ENCODE measurements at regions of chr2 and their contacts with region 1.

Region 1: DNA sequence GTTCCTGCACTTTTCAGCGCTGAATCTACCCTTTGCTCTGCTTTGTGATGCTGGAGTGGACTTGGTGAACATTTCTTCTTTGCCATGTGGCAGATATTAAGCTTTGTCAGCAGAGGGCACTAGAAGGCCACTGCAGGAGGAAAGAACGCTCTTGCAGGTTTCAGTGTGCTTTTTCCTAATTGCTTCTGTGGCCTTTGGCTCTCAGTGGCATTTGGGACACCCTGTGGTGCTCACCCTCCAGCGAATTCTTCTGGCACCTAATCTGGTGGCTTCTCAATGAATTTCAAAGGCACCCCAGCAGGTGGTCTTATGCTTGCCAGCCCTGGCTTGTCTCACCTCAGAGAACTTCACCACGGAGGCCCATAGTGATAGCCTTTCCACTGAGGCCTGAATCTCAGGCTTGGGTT is 146.7 kb downstream of the MYO3B start:
- DNase-seq: peak; percentile 36
- H3K4me3 Mint-ChIP-seq: no peak overlapping the region
- H3K27ac Mint-ChIP-seq: no peak overlapping the region
- H3K4me1 Mint-ChIP-seq: no peaks in the 10 kb centered on the region
- H3K27me3 Mint-ChIP-seq: peaks cover 4% of the 10 kb centered on the region

Region 2: GRCh38 chr2:170361090-170361936 is 36.7 kb after region 1 on chr2:
- intact Hi-C with region 1: loop called (anchors 1 kb)
- DNase-seq: peak; percentile 39
- H3K4me3 Mint-ChIP-seq: no peak overlapping the region
- H3K27ac Mint-ChIP-seq: peak overlapping the region; percentile 94
- H3K4me1 Mint-ChIP-seq: peaks cover 33% of the 10 kb centered on the region
- H3K27me3 Mint-ChIP-seq: peaks cover 2% of the 10 kb centered on the region

Region 3: GRCh38 chr2:170369894-170370293 is 45.3 kb after region 1 on chr2:
- intact Hi-C with region 1: loop called (anchors 1 kb)
- DNase-seq: no peak
- H3K4me3 Mint-ChIP-seq: no peak overlapping the region
- H3K27ac Mint-ChIP-seq: no peak overlapping the region
- H3K4me1 Mint-ChIP-seq: peaks cover 44% of the 10 kb centered on the region
- H3K27me3 Mint-ChIP-seq: peaks cover 12% of the 10 kb centered on the region

Region 4: DNA sequence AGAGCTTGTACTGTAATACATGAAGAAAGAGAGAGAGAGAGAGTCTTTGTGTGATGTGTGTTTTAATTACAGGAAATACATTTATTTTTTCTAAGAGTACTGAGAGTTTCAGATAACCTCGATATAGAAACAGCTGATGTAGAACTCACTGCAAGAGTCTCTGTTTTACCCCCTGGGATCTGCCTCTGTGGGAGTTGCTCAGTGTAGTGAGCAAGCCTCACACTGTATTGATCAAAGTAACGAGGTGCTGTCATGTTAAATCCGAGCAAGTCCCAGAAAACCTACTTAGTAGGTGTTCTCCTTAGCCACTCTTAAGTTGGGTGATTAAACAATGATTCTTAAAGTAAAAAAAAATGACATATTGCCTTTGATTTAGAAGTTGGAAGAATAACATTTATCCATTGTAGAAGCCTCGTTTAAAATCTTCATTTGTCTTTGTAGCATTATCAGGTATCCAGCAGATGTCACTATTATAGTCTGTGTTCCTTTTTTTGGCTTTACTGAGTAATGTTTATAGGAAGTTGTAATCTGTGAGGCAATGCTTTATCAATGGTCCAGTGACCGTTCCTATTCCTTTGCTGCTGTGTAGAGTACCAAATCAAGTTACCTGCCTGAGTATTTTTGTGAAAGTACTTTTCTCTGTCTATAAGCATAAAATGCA is 72.3 kb after region 1 on chr2:
- intact Hi-C with region 1: loop called (anchors 2 kb)
- DNase-seq: no peak
- H3K4me3 Mint-ChIP-seq: no peak overlapping the region
- H3K27ac Mint-ChIP-seq: no peak overlapping the region
- H3K4me1 Mint-ChIP-seq: no peaks in the 10 kb centered on the region
- H3K27me3 Mint-ChIP-seq: peaks cover 33% of the 10 kb centered on the region

Region 5: GRCh38 chr2:170409164-170409535 is 84.5 kb after region 1 on chr2:
- intact Hi-C with region 1: loop called (anchors 1 kb)
- DNase-seq: peak; percentile 52
- H3K4me3 Mint-ChIP-seq: peak overlapping the region; percentile 45
- H3K27ac Mint-ChIP-seq: no peak overlapping the region
- H3K4me1 Mint-ChIP-seq: peaks cover 8% of the 10 kb centered on the region
- H3K27me3 Mint-ChIP-seq: peaks cover 10% of the 10 kb centered on the region

Region 6: DNA sequence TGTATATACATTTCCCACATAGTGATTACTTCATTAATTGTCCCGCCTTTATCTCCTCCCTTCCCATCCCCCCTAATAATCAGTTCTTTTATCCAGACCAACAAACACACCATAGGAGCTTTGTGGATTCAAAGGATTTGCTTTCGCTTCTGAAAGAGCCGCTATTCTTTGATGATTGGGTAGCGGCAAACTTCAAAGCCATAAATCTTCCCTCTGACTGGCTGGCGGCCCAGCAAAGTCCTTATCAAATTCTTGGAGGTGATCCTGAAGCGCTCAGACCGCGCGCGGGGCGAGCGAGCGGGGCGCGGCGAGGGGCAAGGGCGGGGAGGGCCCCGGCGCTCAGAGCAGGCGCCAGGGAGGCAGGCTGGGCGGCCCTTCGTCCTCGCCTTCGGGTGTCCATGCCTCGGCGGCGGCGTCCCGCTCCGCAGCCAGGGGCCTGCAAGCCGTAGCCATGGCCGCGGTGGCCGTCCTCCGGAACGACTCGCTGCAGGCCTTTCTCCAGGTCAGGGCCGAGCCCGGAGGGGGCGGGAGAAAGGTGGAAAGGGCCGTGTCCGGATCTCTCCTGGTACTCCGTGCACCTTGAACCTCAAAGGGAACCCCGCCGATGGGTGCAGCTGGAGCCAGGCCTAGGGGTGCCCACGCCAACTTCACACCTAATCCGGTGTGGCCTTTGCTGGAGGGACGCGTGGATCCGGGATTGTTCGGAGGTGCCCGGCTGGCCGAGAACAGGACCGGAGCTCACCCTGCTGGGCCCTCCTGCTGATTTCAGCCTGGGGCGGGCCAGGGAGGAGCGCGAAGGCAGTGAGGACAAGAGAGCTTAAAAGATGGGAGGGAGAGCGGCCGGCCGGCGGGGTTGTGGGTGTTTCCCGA is 390.7 kb after region 1 on chr2 and contains the start of gene SP5:
- intact Hi-C with region 1: loop called (anchors 1 kb)
- DNase-seq: peak; percentile 13
- H3K4me3 Mint-ChIP-seq: peak within 1 kb of the TSS; percentile 78
- H3K27ac Mint-ChIP-seq: peak within 1 kb of the TSS; percentile 61
- H3K4me1 Mint-ChIP-seq: peaks cover 31% of the 10 kb centered on the region
- H3K27me3 Mint-ChIP-seq: peaks cover 68% of the 10 kb centered on the region
- total RNA-seq, gene SP5: not detected in 2 replicates

Region 7: GRCh38 chr2:170873035-170873692 is 548.5 kb after region 1 on chr2:
- intact Hi-C with region 1: loop called (anchors 1 kb)
- DNase-seq: peak; percentile 63
- H3K4me3 Mint-ChIP-seq: peak overlapping the region; percentile 38
- H3K27ac Mint-ChIP-seq: peak overlapping the region; percentile 73
- H3K4me1 Mint-ChIP-seq: peaks cover 13% of the 10 kb centered on the region
- H3K27me3 Mint-ChIP-seq: no peaks in the 10 kb centered on the region

Region 8: GRCh38 chr2:170997893-170998597 is 673.4 kb after region 1 on chr2:
- intact Hi-C with region 1: no loop called
- DNase-seq: no peak
- H3K4me3 Mint-ChIP-seq: no peak overlapping the region
- H3K27ac Mint-ChIP-seq: no peak overlapping the region
- H3K4me1 Mint-ChIP-seq: no peaks in the 10 kb centered on the region
- H3K27me3 Mint-ChIP-seq: no peaks in the 10 kb centered on the region

Measured in activated T-helper 1 cell treated with anti-CD3 and anti-CD28 coated beads, Interleukin-12 subunit alpha, Interleukin-12 subunit beta, Interleukin-2, Interleukin-4 antibody, amounts not matched to agents 30 ng/mL and 10 ng/mL and 1 ng/mL, durations not matched to agents 14 hours and 24 hours and 36 hours (primary cell).